ENCODE measurements at regions of chr5 and their contacts with region 1.

Region 1: GRCh38 chr5:80686757-80687156 is 32.0 kb upstream of the DHFR start:
- DNase-seq: no peak
- ATAC-seq: no peak
- H3K4me3 Mint-ChIP-seq: no peak overlapping the region
- H3K27ac Mint-ChIP-seq: no peak overlapping the region
- H3K4me1 Mint-ChIP-seq: peaks cover 27% of the 10 kb centered on the region
- H3K27me3 Mint-ChIP-seq: no peaks in the 10 kb centered on the region

Region 2: DNA sequence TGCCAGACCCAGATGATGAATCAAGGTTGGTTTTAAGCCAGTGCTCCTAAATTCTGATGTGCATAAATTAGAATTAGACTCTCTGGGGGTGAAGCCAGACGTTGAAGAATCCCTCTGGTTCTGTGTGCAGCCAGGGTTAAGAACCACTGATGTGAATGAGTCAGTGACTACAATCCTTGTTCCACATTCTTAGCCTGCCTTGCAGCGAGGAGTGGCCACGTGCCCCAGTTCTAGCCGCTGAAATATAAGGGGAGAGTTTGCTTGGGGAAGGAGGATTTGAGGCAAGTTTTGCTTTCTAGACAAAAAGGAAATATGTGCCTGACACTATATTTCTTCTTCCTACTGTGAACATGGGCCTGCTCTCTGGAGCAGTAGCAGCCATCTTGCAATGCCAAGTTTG is 66.5 kb before region 1 on chr5:
- CTCF ChIA-PET with region 1: no interaction called
- POLR2A ChIA-PET with region 1: no interaction called
- DNase-seq: no peak
- ATAC-seq: no peak
- H3K4me3 Mint-ChIP-seq: no peak overlapping the region
- H3K27ac Mint-ChIP-seq: no peak overlapping the region
- H3K4me1 Mint-ChIP-seq: peaks cover 13% of the 10 kb centered on the region
- H3K27me3 Mint-ChIP-seq: no peaks in the 10 kb centered on the region

Region 3: GRCh38 chr5:81165493-81166119 is 478.8 kb after region 1 on chr5:
- CTCF ChIA-PET with region 1: interaction called, 21 read pairs
- POLR2A ChIA-PET with region 1: no interaction called
- DNase-seq: peak; percentile 80
- ATAC-seq: peak; percentile 89
- H3K4me3 Mint-ChIP-seq: no peak overlapping the region
- H3K27ac Mint-ChIP-seq: no peak overlapping the region
- H3K4me1 Mint-ChIP-seq: peaks cover 18% of the 10 kb centered on the region
- H3K27me3 Mint-ChIP-seq: no peaks in the 10 kb centered on the region

Region 4: DNA sequence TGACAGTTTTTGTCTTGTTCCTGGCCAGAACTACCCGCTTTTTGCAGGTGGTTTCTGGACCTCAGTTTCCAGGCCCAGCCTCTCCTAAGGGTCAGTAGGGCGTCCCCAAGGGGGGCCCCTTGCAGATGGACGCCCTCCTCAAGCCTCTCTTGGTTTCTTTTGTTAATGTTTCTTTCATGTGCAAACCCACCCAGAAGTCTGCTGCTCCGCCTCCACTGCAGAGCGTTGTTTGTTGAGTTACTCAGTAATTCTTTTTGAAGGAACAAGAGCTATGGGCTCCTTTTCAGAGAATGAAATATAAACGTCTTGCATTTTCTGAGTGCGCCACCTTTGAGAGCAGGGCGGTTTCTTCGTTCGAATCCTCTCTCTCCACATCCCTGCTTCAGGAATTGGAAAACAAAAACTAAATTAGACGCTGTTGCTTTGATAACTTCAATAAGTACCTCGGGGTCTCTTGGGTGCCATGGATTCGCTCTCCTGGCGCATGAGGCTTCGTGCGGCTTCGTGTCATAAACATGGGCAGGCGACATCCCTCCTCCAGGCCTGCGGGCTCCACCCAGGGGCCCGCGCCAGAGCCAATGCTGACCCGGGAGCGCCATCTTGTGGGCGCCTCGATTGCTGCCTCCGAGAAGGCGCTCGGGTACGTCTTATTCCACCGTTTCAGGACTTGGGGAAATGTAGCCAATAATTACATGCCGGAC is 508.0 kb after region 1 on chr5:
- CTCF ChIA-PET with region 1: interaction called, 15 read pairs
- POLR2A ChIA-PET with region 1: no interaction called
- DNase-seq: peak; percentile 88
- ATAC-seq: peak; percentile 99
- H3K4me3 Mint-ChIP-seq: peak overlapping the region; percentile 36
- H3K27ac Mint-ChIP-seq: peak overlapping the region; percentile 58
- H3K4me1 Mint-ChIP-seq: peaks cover 9% of the 10 kb centered on the region
- H3K27me3 Mint-ChIP-seq: no peaks in the 10 kb centered on the region

Region 5: GRCh38 chr5:81486711-81487110 is 800.0 kb after region 1 on chr5:
- CTCF ChIA-PET with region 1: no interaction called
- POLR2A ChIA-PET with region 1: no interaction called
- DNase-seq: no peak
- ATAC-seq: no peak
- H3K4me3 Mint-ChIP-seq: no peak overlapping the region
- H3K27ac Mint-ChIP-seq: no peak overlapping the region
- H3K4me1 Mint-ChIP-seq: no peaks in the 10 kb centered on the region
- H3K27me3 Mint-ChIP-seq: no peaks in the 10 kb centered on the region

Measured in activated CD8-positive, alpha-beta T cell treated with anti-CD3 and anti-CD28 coated beads, Interleukin-2, amount 10 ng/mL, durations not matched to agents 7 days and 5 days (primary cell).